ENCODE measurements at regions of chr7 and their contacts with region 1.

Region 1: GRCh38 chr7:149261829-149262617 is at the start of gene ZNF783:
- DNase-seq: peak; percentile 82 to 90
- ATAC-seq: peak; percentile 95 to 97 (median 96)
- H3K4me3 ChIP-seq: peak within 1 kb of the TSS; percentile 7 to 64 (median 60)
- H3K27ac ChIP-seq: peak within 1 kb of the TSS; percentile 64 to 97 (median 90)
- H3K4me1 ChIP-seq: peaks cover 0 to 28% (median 16%) of the 10 kb centered on the region in 9 donors
- H3K27me3 ChIP-seq: no peaks in the 10 kb centered on the region
- CTCF ChIP-seq: peak; percentile 65 to 95 (median 86)
- total RNA-seq, gene ZNF783: 2.6 to 6.0 (median 3.3) TPM

Region 2: GRCh38 chr7:149497456-149498261 is 235.6 kb after region 1 on chr7 and contains the start of gene ZNF746:
- intact Hi-C with region 1: loop called in 3 of 10 experiments (anchors 5 to 10 kb)
- DNase-seq: peak; percentile 64 to 87
- ATAC-seq: peak; percentile 78 to 93 (median 89)
- H3K4me3 ChIP-seq: peak within 1 kb of the TSS; percentile 59 to 94 (median 70)
- H3K27ac ChIP-seq: peak within 1 kb of the TSS; percentile 64 to 93 (median 86)
- H3K4me1 ChIP-seq: peaks cover 5 to 27% (median 15%) of the 10 kb centered on the region in 9 donors
- H3K27me3 ChIP-seq: no peaks in the 10 kb centered on the region
- CTCF ChIP-seq: peak; percentile 32 to 85 (median 62)
- total RNA-seq, gene ZNF746: 6.2 to 10.5 (median 8.5) TPM

Measured in heart right ventricle (tissue), 16 donors.